ENCODE measurements at regions of chr22 and their contacts with region 1.

Region 1: GRCh38 chr22:29635734-29636357 is 32.4 kb downstream of the NF2 start:
- DNase-seq: peak; percentile 28 to 62
- ATAC-seq: peak; percentile 89; a peak in 5 of 6 replicates
- H3K4me3 ChIP-seq: no peak overlapping the region
- H3K27ac ChIP-seq: no peak overlapping the region
- H3K4me1 ChIP-seq: peaks cover 9% of the 10 kb centered on the region; the same call in 2 of the 3 replicates
- CTCF ChIP-seq: peak; percentile 70
- EP300 ChIP-seq: no peak
- POLR2A ChIP-seq: no peak
- RAD21 ChIP-seq: peak; percentile 67 to 74

Region 2: DNA sequence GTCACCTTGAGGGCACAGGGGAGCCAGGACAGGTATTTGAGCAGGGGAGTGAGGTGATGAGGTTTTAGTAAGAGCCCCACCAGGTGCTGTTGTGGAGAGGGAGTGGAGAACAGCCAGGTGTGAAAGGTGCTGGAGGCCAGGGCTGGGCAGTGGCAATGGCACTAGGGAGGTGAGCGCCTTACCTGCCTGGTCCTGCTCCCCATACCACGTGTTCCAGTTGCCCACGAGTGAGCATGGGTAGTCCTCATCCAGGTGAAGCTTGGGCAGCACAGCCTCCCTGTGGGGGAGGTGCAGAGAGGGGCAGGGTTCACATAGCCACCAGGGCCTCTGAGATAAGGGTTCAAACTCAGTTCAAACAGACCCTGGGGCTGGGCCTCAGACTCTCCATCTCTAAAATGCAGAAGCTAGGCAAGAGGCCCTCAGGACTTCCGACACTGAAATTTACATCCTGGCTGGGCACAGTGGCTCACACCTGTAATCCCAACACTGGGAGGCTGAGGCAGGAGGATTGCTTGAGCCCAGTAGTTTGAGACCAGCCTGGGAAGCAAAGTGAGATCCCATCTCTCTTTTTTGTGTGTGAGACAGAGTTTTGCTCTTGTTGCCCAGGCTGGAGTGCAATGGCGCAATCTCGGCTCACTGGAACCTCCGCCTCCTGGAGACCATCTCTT is 66.7 kb before region 1 on chr22:
- CTCF ChIA-PET with region 1: no interaction called
- POLR2A ChIA-PET with region 1: no interaction called
- DNase-seq: no peak
- ATAC-seq: no peak
- H3K4me3 ChIP-seq: no peak overlapping the region
- H3K27ac ChIP-seq: no peak overlapping the region
- H3K4me1 ChIP-seq: no peaks in the 10 kb centered on the region
- CTCF ChIP-seq: no peak
- EP300 ChIP-seq: no peak
- POLR2A ChIP-seq: no peak
- RAD21 ChIP-seq: no peak

Region 3: GRCh38 chr22:29625090-29625825 is 10.6 kb before region 1 on chr22:
- CTCF ChIA-PET with region 1: interaction called, 38 read pairs
- POLR2A ChIA-PET with region 1: no interaction called
- DNase-seq: peak; percentile 38 to 69
- ATAC-seq: peak; percentile 52 to 61; a peak in 3 of 6 replicates
- H3K4me3 ChIP-seq: no peak overlapping the region
- H3K27ac ChIP-seq: peak overlapping the region; percentile 37 to 94; a peak in 5 of 6 replicates
- H3K4me1 ChIP-seq: peaks cover 78% of the 10 kb centered on the region
- CTCF ChIP-seq: peak; percentile 85
- EP300 ChIP-seq: no peak
- POLR2A ChIP-seq: no peak
- RAD21 ChIP-seq: peak; percentile 51 to 54; a peak in 4 of 5 replicates

Region 4: GRCh38 chr22:29647954-29648737 is 12.3 kb after region 1 on chr22:
- CTCF ChIA-PET with region 1: interaction called, 15 read pairs
- POLR2A ChIA-PET with region 1: no interaction called
- DNase-seq: no peak
- ATAC-seq: no peak
- H3K4me3 ChIP-seq: no peak overlapping the region
- H3K27ac ChIP-seq: no peak overlapping the region
- H3K4me1 ChIP-seq: no peaks in the 10 kb centered on the region
- CTCF ChIP-seq: no peak
- EP300 ChIP-seq: no peak
- POLR2A ChIP-seq: no peak
- RAD21 ChIP-seq: no peak